GM12878 (cell line): ENCODE measurements at regions of chr10 and their contacts with region 1.

Region 1: GRCh38 chr10:89363729-89364442 is 14.0 kb upstream of the IFIT1B start:
- DNase-seq: peak; percentile 39
- ATAC-seq: peak; percentile 45
- H3K4me3 ChIP-seq: no peak overlapping the region
- H3K27ac ChIP-seq: peak overlapping the region; percentile 59
- H3K4me1 ChIP-seq: peaks cover 25% of the 10 kb centered on the region
- H3K27me3 ChIP-seq: no peaks in the 10 kb centered on the region
- CTCF ChIP-seq: no peak
- EP300 ChIP-seq: no peak
- POLR2A ChIP-seq: no peak
- RAD21 ChIP-seq: no peak

Region 2: GRCh38 chr10:89351780-89352597 is 11.9 kb before region 1 on chr10:
- CTCF ChIA-PET with region 1: interaction called, 39 read pairs
- POLR2A ChIA-PET with region 1: interaction called, 4 read pairs
- RAD21 ChIA-PET with region 1: interaction called, 38 read pairs
- SMC1A ChIA-PET with region 1: interaction called, 97 read pairs
- in situ Hi-C with region 1: no loop called
- intact Hi-C with region 1: loop called (anchors 1 kb)
- DNase-seq: no peak
- ATAC-seq: peak; percentile 84
- H3K4me3 ChIP-seq: no peak overlapping the region
- H3K27ac ChIP-seq: peak overlapping the region; percentile 51
- H3K4me1 ChIP-seq: peaks cover 44% of the 10 kb centered on the region
- H3K27me3 ChIP-seq: no peaks in the 10 kb centered on the region
- CTCF ChIP-seq: no peak
- EP300 ChIP-seq: no peak
- POLR2A ChIP-seq: no peak
- RAD21 ChIP-seq: no peak